Lower leg skin (tissue), 4 donors: ENCODE measurements at regions of chr9 and their contacts with region 1.

Region 1: DNA sequence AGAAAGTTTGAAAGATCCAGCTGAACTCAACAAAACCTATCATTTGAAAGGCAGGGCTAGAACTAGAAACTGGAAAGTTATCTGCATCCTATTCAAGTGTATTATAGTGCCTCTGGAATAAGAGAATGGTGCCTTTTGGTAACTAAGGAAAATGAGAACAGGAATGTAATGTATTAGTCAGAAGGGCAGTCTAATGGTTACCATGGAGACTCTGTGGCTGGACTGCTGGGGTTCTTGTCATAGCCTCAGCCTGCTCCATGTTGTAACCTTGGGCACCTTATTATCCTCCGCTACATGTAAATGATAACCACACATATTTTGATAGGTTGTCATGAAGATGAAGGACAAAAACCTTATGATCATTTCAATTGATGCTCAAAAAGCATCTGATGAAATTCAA is 24.6 kb upstream of the IFNB1 start:
- DNase-seq: no peak
- H3K4me3 ChIP-seq: no peak overlapping the region
- CTCF ChIP-seq: no peak
- POLR2A ChIP-seq: no peak

Region 2: GRCh38 chr9:20941174-20941690 is 161.1 kb before region 1 on chr9:
- intact Hi-C with region 1: loop called (anchors 5 kb)
- DNase-seq: peak in 1 of 2 donors; percentile 32
- H3K4me3 ChIP-seq: no peak overlapping the region
- CTCF ChIP-seq: no peak
- POLR2A ChIP-seq: no peak

Region 3: DNA sequence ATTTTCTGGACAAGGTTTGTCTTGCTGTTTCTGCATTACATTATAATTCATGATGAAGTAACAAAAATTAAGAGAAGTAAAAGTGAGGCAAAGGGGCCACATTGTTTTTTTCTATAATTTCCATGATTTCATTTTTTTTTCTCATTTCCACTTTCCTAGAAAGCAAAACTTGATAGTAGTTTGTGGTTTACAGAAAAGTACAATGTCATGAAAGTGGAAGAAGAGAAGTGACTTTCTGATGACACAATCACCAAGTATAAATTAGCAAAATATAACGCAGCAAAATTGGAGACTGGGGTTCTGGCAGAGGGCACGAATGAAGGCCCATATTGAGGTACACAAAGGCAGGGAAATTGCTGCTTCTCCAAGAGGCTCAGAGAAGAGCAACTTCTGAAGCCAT is 142.5 kb after region 1 on chr9:
- intact Hi-C with region 1: no loop called
- DNase-seq: no peak
- H3K4me3 ChIP-seq: no peak overlapping the region
- CTCF ChIP-seq: no peak
- POLR2A ChIP-seq: no peak